GM18951 (cell line): ENCODE measurements at regions of chr14 and their contacts with region 1.

Region 1: DNA sequence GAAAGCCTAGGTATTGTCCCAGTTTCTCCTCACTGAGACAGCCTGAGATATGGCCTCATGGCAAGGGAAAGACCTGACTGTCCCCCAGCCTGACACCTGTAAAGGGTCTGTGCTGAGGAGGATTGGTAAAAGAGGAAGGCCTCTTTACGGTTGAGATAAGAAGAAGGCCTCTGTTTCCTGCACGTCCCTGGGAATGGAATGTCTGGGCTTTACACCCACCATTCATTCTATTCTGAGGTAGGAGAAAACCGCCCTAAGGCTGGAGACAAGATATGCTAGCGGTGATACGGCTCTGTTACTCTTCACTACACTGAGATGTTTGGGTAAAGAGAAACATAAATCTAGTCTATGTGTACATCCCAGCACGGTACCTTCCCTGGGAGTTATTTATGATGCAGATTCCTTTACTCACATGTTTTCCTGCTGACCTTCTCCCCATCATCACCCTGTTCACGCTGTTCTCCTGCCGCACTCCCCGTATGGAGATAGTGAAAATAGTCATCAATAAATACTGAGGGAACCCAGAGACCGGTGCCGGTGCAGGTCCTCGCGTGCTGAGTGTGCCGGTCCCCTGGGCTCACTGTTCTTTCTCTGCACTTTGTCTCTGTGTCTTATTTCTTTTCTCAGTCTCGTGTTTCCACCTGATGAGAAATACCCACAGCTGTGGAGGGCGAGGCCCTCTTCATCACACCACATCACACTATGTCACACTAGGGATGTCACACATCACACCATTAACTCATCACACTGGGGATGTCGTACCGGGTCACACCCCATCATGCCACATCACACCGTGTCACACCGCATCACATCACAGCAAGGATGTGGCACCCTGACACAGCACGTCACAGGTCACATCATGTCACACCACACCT is 206.6 kb downstream of the TMEM121 start:
- POLR2A ChIP-seq: no peak

Region 2: GRCh38 chr14:105636935-105637334 is 96.0 kb before region 1 on chr14:
- in situ Hi-C with region 1: loop called (anchors 5 kb)
- POLR2A ChIP-seq: no peak